ENCODE measurements at regions of chr1 and their contacts with region 1.

Region 1: GRCh38 chr1:150925816-150926741 is at the start of gene SETDB1:
- DNase-seq: peak; percentile 97
- ATAC-seq: peak; percentile 98
- H3K4me3 ChIP-seq: peak within 1 kb of the TSS; percentile 96 to 98
- H3K27ac ChIP-seq: peak within 1 kb of the TSS in 1 of 2 donors; percentile 74
- H3K4me1 ChIP-seq: no peaks in the 10 kb centered on the region
- H3K27me3 ChIP-seq: no peaks in the 10 kb centered on the region
- total RNA-seq, gene SETDB1: 33.5 to 56.2 TPM

Region 2: GRCh38 chr1:150876119-150876454 is 50.0 kb before region 1 on chr1:
- intact Hi-C with region 1: loop called in 1 of 2 experiments (anchors 5 kb)
- DNase-seq: no peak
- ATAC-seq: peak; percentile 79
- H3K4me3 ChIP-seq: peak overlapping the region; percentile 56 to 97
- H3K27ac ChIP-seq: peak overlapping the region; percentile 51 to 80
- H3K4me1 ChIP-seq: no peaks in the 10 kb centered on the region
- H3K27me3 ChIP-seq: no peaks in the 10 kb centered on the region

Measured in aorta (tissue), 5 donors.